ENCODE measurements at regions of chr1 and their contacts with region 1.

Region 1: DNA sequence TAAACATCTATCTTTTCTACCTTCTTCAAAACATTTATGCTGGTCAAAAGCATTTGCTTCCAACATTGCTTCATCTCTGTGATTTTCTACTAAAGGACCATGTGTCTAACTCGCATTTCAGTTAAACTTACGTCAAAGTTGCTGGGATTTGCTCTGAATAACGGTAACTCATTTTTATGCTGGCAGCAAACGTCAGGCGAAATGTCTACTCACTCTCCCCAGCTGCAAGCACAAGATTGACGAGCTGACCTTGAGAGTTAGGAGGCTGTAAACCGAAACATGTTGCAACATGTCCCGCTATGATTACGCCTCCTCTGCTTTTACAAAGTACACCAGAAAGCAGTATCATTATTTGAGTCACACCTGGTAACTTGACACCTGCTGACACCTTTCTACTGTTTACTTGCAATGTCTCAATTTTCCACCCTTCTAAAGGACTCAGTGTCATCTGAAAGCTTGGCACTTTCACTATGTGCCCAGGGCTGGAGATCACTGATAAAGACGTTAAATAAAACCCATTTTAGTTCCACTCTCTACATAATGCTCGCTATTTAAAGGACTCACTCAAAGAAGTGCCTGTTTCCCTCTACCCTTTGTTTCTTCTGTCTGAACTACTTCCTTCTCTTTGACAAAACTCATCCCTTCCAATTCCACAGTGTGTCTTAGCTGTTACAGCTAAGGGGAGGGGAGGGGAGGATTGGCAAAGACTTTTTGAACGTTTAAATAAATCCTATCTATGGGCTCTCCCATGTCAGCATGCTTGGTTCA is 111.9 kb downstream of the PTPN14 start:
- DNase-seq: peak; percentile 86 to 88
- ATAC-seq: peak; percentile 91 to 93
- H3K4me3 ChIP-seq: peak overlapping the region; percentile 11 to 31 (median 20)
- H3K27ac ChIP-seq: peak overlapping the region; percentile 80 to 93 (median 87)
- H3K4me1 ChIP-seq: peaks cover 46 to 61% of the 10 kb centered on the region in 2 donors
- H3K27me3 ChIP-seq: no peaks in the 10 kb centered on the region
- CTCF ChIP-seq: no peak
- POLR2A ChIP-seq: peak in 1 of 2 donors; percentile 37

Region 2: GRCh38 chr1:214362188-214362882 is 77.2 kb before region 1 on chr1:
- in situ Hi-C with region 1: no loop called
- intact Hi-C with region 1: loop called (anchors 5 kb)
- DNase-seq: peak; percentile 81 to 90
- ATAC-seq: peak; percentile 92 to 96
- H3K4me3 ChIP-seq: peak overlapping the region in 2 of 4 donors; percentile 3 to 8
- H3K27ac ChIP-seq: peak overlapping the region; percentile 87 to 97 (median 91)
- H3K4me1 ChIP-seq: peaks cover 40 to 57% of the 10 kb centered on the region in 2 donors
- H3K27me3 ChIP-seq: no peaks in the 10 kb centered on the region
- CTCF ChIP-seq: no peak
- POLR2A ChIP-seq: peak; percentile 24 to 40

Region 3: DNA sequence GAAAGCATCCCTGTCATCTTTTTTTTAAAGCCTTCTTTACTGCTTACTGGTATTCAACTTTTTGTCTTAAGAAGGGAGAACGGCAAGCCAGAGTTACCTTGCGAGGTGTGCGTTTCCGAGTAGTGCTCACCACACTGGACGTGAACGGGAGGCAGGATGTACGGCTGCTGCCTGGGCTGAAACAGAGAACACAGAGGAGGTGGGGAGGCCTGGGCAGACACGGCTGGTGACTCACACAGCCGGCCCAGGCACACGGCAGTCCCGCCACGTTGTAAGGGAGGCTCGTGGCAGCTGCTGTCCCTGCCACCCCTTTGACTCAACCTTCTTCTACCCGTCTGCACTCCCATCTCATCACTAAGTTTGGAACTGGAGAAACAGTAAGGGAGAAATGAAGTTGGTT is 52.8 kb before region 1 on chr1:
- in situ Hi-C with region 1: no loop called
- intact Hi-C with region 1: loop called (anchors 2 kb)
- DNase-seq: peak; percentile 45 to 65
- ATAC-seq: peak; percentile 84 to 89
- H3K4me3 ChIP-seq: no peak overlapping the region
- H3K27ac ChIP-seq: peak overlapping the region; percentile 52 to 68 (median 58)
- H3K4me1 ChIP-seq: peaks cover 0 to 3% of the 10 kb centered on the region in 2 donors
- H3K27me3 ChIP-seq: no peaks in the 10 kb centered on the region
- CTCF ChIP-seq: no peak
- POLR2A ChIP-seq: no peak

Region 4: DNA sequence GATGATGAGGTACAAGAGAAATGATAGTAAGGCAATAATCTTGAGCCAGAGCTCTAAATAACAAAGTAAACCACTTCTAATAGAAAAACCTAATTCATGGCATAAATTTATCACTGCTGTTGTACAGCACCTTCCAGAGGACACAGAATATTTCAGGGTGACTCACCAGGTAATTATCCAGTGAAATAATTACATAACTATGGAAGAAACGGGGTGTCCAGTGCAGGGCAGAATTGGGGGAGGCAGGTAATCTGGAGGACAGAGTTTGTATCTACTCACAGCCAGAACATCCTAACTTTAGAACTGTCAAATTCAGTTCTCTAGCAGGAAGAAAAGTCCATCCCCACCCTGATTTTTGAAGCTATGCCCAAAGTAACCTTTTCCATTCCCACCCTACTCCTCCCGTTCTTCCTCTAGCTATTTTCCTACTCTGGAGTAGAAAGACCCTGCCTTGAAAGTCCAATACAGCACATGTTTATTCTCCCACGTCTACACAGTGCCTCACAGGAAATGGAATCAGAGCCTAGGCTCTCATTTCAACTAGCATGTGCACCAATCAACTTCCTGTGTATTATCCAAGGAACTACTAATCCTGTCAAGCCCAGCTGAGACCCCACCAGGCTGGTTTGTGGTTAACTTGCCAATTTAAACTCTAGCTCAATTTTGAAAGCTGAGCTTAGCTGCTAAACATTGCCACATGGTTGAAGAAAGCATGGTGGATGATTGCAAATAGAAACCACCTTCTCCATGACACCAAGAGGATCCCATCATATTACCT is 15.3 kb after region 1 on chr1:
- in situ Hi-C with region 1: no loop called
- intact Hi-C with region 1: loop called (anchors 1 kb)
- DNase-seq: no peak
- ATAC-seq: peak in 1 of 2 donors; percentile 26
- H3K4me3 ChIP-seq: no peak overlapping the region
- H3K27ac ChIP-seq: peak overlapping the region in 2 of 4 donors; percentile 18 to 83
- H3K4me1 ChIP-seq: peaks cover 57% of the 10 kb centered on the region in 2 donors
- H3K27me3 ChIP-seq: no peaks in the 10 kb centered on the region
- CTCF ChIP-seq: no peak
- POLR2A ChIP-seq: no peak

Region 5: GRCh38 chr1:214494706-214495105 is 55.2 kb after region 1 on chr1:
- in situ Hi-C with region 1: loop called in 1 of 4 experiments (anchors 5 kb)
- intact Hi-C with region 1: no loop called
- DNase-seq: no peak
- ATAC-seq: peak in 1 of 2 donors; percentile 10
- H3K4me3 ChIP-seq: no peak overlapping the region
- H3K27ac ChIP-seq: peak overlapping the region; percentile 72 to 90 (median 78)
- H3K4me1 ChIP-seq: peaks cover 64 to 88% of the 10 kb centered on the region in 2 donors
- H3K27me3 ChIP-seq: no peaks in the 10 kb centered on the region
- CTCF ChIP-seq: no peak
- POLR2A ChIP-seq: no peak

Region 6: GRCh38 chr1:214540324-214540723 is 100.8 kb after region 1 on chr1:
- in situ Hi-C with region 1: no loop called
- intact Hi-C with region 1: loop called (anchors 5 kb)
- DNase-seq: no peak
- ATAC-seq: no peak
- H3K4me3 ChIP-seq: no peak overlapping the region
- H3K27ac ChIP-seq: peak overlapping the region; percentile 61 to 82 (median 73)
- H3K4me1 ChIP-seq: peaks cover 64 to 77% of the 10 kb centered on the region in 2 donors
- H3K27me3 ChIP-seq: no peaks in the 10 kb centered on the region
- CTCF ChIP-seq: no peak
- POLR2A ChIP-seq: no peak

Measured in gastrocnemius medialis (tissue), 4 donors.